ENCODE measurements at regions of chr3 and their contacts with region 1.

Region 1: GRCh38 chr3:168249550-168250414 is 154.1 kb upstream of the GOLIM4 start:
- DNase-seq: peak; percentile 88 to 93 (median 88)
- H3K4me3 ChIP-seq: peak overlapping the region; percentile 78 to 98 (median 95)
- H3K27ac ChIP-seq: peak overlapping the region; percentile 47 to 73
- H3K4me1 ChIP-seq: peaks cover 4 to 35% (median 12%) of the 10 kb centered on the region in 4 experiments
- H3K27me3 ChIP-seq: no peaks in the 10 kb centered on the region

Region 2: GRCh38 chr3:167350245-167350862 is 899.4 kb before region 1 on chr3:
- CTCF ChIA-PET with region 1: no interaction called
- POLR2A ChIA-PET with region 1: no interaction called
- DNase-seq: peak; percentile 31 to 67 (median 58)
- H3K4me3 ChIP-seq: no peak overlapping the region
- H3K27ac ChIP-seq: no peak overlapping the region
- H3K4me1 ChIP-seq: no peaks in the 10 kb centered on the region
- H3K27me3 ChIP-seq: no peaks in the 10 kb centered on the region

Region 3: DNA sequence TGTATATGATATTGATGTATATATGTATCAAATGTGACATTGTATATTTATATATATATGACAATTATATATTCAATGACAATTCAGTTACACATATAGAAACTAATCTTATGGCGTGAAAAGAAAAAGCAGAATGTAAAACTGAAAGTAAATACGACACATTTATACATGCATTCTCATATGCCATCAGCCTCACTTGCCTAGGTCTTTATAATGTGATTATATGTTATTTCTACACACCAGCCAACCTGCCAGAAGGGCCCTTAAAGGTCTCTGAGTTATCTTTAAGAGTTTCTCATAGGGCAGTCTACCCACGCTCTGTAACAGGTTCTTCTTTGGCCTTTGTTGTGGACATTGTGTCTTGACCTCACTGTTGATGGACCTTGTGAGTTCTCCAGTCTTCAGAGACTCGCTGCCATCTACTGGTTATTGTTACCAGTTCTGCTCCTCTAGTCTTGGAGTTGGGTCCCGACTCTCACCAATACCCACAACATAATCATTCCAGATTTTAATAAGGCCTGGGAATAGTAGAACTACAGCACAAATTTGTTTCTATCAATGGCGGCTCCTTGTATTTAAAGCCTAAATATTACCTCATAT is 217.4 kb after region 1 on chr3:
- CTCF ChIA-PET with region 1: interaction called, 10 read pairs
- POLR2A ChIA-PET with region 1: no interaction called
- DNase-seq: peak; percentile 57 to 62 (median 60)
- H3K4me3 ChIP-seq: peak overlapping the region in 5 of 7 experiments; percentile 61 to 79 (median 65)
- H3K27ac ChIP-seq: peak overlapping the region in 1 of 2 experiments; percentile 55
- H3K4me1 ChIP-seq: peaks cover 0 to 12% (median 3%) of the 10 kb centered on the region in 4 experiments
- H3K27me3 ChIP-seq: no peaks in the 10 kb centered on the region